Colonic mucosa (tissue), 4 donors: ENCODE measurements at regions of chr3 and their contacts with region 1.

Region 1: GRCh38 chr3:146339349-146339748 is 88.4 kb upstream of the PLSCR4 start:
- DNase-seq: no peak
- H3K4me3 ChIP-seq: no peak overlapping the region
- H3K27ac ChIP-seq: no peak overlapping the region
- H3K4me1 ChIP-seq: no peaks in the 10 kb centered on the region
- H3K27me3 ChIP-seq: no peaks in the 10 kb centered on the region
- CTCF ChIP-seq: no peak

Region 2: DNA sequence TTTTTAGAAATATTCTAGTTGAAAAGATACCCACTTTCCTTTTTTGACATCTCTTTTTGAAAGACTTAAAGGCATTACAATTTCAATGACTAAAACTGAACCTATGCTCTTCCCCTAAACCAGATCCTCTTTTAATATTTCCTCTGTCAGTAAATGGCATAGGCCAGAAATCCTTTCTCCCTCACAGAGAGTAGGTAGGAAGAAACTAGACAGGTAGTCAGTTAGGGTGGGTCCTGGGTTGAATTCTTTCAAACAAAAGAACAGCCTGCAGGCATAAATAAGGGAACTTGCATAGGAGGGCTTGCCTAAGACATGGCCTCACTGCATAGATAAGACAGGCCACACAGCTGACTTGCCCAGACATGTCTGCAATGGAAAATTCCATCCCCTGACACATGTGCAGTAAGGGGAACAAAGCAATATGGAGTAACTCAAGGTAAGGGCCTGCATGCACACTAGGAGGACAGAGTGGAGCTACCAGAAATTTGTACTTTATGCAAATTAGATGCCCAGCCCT is 242.7 kb after region 1 on chr3:
- intact Hi-C with region 1: loop called (anchors 5 kb)
- DNase-seq: no peak
- H3K4me3 ChIP-seq: no peak overlapping the region
- H3K27ac ChIP-seq: no peak overlapping the region
- H3K4me1 ChIP-seq: no peaks in the 10 kb centered on the region
- H3K27me3 ChIP-seq: no peaks in the 10 kb centered on the region
- CTCF ChIP-seq: no peak